ENCODE measurements at regions of chr17 and their contacts with region 1.

Region 1: DNA sequence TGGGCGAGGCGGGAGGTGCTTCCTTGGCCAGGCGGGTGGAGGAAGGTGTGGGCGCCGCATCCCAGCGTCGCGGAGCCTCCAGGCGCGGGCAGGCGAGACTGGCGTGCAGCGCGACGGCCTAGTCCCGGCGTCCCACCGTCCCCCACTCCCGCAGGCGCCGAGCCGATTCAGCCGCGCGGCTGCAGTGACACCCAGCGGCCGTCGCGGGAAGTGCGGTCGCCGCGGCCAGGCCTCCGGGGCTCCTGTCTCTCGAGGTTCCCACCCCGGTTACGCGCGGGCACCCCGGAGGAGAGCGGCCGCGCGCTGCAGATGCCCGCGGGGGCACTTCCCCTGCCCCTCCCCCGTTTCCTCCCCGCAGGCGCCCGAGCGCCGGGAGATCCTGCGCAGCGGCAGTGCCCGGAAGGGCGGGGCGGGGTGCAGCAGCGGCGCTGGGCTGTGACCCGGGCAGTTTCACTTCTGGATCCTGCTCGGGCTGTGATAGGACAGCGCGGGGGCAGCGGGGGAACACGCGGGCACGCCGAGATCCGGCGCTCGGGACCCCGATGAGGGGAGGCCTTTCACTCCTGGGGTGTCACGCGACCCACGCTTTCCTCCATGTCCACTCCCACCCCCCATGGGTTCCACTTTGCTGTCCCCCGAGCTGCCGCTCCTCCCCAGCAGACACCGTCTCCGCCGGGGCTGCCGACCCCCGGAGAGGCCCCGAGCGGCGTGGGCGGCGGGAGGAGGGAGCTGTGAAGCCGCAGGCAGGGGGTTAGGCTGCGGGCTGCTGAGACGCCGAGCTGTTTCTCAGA is 16.6 kb downstream of the GRB7 start:
- DNase-seq: peak; percentile 99
- H3K4me3 Mint-ChIP-seq: peak overlapping the region; percentile 88
- H3K27ac Mint-ChIP-seq: peak overlapping the region; percentile 80
- H3K4me1 Mint-ChIP-seq: peaks cover 53% of the 10 kb centered on the region
- H3K27me3 Mint-ChIP-seq: no peaks in the 10 kb centered on the region

Region 2: GRCh38 chr17:39636927-39637736 is 117.2 kb before region 1 on chr17 and contains the start of gene STARD3:
- intact Hi-C with region 1: loop called (anchors 1 kb)
- DNase-seq: peak; percentile 97
- H3K4me3 Mint-ChIP-seq: peak within 1 kb of the TSS; percentile 90
- H3K27ac Mint-ChIP-seq: peak within 1 kb of the TSS; percentile 79
- H3K4me1 Mint-ChIP-seq: peaks cover 35% of the 10 kb centered on the region
- H3K27me3 Mint-ChIP-seq: no peaks in the 10 kb centered on the region
- total RNA-seq, gene STARD3: 53.6 and 60.3 TPM in 2 replicates

Region 3: DNA sequence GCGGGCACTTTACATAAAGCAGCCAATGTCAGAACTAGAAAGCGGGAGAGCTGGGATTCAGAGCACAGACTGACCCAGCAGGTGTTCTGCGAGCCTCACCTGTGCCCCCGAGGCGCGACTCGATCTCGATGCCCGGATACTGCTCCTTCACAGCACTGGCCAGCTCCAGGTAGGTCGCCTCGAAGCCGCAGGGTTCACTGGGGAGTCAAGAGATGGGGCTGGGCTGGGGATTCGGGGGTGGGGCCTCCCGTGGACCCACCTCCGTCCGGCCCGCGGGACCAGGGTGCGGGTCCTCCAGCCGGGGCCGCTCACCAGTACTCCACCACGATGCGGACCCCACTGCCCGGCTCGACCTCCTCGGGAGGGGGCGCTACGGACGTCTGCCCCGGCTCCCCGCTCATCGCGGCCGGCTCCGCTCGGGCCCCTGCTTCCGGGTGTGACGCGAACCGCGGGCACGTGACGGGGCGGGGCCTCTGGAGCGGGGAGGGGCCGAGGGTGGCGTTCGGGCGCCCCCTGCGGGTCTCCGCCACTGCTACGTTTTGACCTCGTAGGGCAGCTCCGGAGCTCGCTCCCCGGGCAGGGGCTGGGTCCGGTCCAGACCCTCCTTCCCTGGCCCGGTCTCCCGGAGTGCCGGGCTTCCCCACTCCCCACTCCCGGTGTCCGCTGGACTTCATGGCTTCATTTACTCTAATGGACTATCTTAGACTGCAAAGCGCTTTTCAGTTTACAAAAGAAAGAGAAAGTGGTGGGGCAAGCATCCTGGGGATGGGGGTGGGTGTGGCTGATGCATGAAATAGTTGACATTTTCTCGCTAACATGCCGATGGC is 24.0 kb before region 1 on chr17 and contains the start of gene MIEN1:
- intact Hi-C with region 1: loop called (anchors 1 kb)
- DNase-seq: peak; percentile 99
- H3K4me3 Mint-ChIP-seq: peak within 1 kb of the TSS; percentile 95
- H3K27ac Mint-ChIP-seq: peak within 1 kb of the TSS; percentile 92
- H3K4me1 Mint-ChIP-seq: peaks cover 16% of the 10 kb centered on the region
- H3K27me3 Mint-ChIP-seq: peaks cover 2% of the 10 kb centered on the region
- total RNA-seq, gene MIEN1: 29.8 and 33.4 TPM in 2 replicates

Region 4: GRCh38 chr17:39794249-39794970 is 40.1 kb after region 1 on chr17:
- intact Hi-C with region 1: loop called (anchors 5 kb)
- DNase-seq: peak; percentile 75
- H3K4me3 Mint-ChIP-seq: peak overlapping the region; percentile 76
- H3K27ac Mint-ChIP-seq: peak overlapping the region; percentile 81
- H3K4me1 Mint-ChIP-seq: peaks cover 55% of the 10 kb centered on the region
- H3K27me3 Mint-ChIP-seq: no peaks in the 10 kb centered on the region

Region 5: GRCh38 chr17:39927101-39927928 is 173.0 kb after region 1 on chr17 and contains the starts of genes LRRC3C and ORMDL3:
- intact Hi-C with region 1: loop called (anchors 10 kb)
- DNase-seq: peak; percentile 98
- H3K4me3 Mint-ChIP-seq: peak within 1 kb of the TSS; percentile 88
- H3K27ac Mint-ChIP-seq: peak within 1 kb of the TSS; percentile 80
- H3K4me1 Mint-ChIP-seq: peaks cover 47% of the 10 kb centered on the region
- H3K27me3 Mint-ChIP-seq: no peaks in the 10 kb centered on the region
- total RNA-seq, gene LRRC3C: not detected in 2 replicates
- total RNA-seq, gene ORMDL3: 65.7 and 65.8 TPM in 2 replicates

Region 6: DNA sequence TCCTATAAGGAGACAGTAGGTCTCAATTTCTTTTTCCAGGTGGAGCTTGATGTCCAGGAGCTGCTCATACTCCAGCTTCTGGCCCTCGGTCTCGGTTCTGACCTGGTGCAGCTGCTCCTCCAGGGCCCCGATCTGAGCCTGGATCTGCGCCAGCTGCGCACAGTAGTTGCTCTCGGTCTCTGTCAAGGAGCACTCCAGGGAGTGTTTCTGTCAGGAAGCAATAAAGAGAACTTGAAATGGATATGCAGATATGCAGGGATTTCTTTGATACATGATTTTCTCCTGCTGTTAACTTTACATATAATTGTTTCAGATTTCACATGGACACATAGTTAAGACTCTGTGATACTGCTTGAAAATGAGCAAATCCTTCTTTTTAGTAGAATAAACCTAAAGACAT is 996.0 kb after region 1 on chr17:
- intact Hi-C with region 1: no loop called
- DNase-seq: no peak
- H3K4me3 Mint-ChIP-seq: no peak overlapping the region
- H3K27ac Mint-ChIP-seq: no peak overlapping the region
- H3K4me1 Mint-ChIP-seq: no peaks in the 10 kb centered on the region
- H3K27me3 Mint-ChIP-seq: peaks cover 34% of the 10 kb centered on the region

Measured in activated CD4-positive, alpha-beta T cell treated with anti-CD3 and anti-CD28 coated beads, Interleukin-2, amount 10 ng/mL, durations not matched to agents 24 days and 14 days (primary cell).